Caco-2 (cell line): ENCODE measurements at regions of chr2 and their contacts with region 1.

Region 1: DNA sequence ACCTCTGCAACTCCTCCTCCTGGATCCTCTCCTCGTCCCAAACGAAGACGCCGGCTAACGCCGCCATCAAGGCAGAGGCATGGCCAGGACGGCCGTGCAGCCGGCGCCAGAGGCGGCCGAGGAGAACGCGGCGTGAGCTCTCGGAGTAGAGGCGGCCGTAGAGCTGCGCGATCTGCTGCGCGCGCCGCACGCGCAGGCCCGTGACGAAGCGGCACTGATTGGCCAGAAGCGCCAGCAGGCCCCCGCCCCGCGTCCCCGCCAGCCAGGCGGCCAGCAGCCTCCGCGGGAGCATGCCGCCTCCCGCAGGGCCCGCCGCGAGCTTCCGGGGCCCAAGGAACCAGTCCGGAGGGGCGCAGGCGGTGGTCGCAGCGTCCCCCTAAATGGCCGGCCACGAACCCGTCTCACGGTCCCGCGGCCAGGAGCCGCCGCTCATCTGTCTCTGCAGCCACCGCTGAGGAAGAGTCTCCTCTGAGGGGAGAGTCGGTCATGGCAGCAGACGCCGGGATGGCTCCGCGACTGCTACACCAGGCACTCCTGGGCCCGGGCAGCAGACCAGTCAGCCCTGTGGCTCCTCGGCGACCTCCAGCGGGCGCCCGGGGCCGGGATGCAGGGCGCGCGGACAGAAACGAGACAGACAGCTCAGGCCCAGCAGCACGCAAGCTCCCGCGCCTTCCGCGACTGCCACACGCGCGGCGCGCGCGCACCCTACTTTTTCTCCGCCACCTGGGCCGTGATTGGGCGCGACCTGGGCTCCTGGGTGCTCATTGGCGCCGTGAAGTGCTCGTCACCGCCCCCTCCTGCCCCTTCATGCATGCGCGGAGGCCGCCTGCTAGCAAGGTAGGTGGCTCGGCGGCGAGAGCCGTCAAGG is at the start of gene STARD7:
- DNase-seq: peak; percentile 99 to 100
- H3K4me3 ChIP-seq: peak within 1 kb of the TSS; percentile 68
- H3K4me3 Mint-ChIP-seq: peak within 1 kb of the TSS; percentile 96
- H3K27ac Mint-ChIP-seq: peak within 1 kb of the TSS; percentile 80
- H3K4me1 ChIP-seq: peaks cover 31% of the 10 kb centered on the region
- H3K4me1 Mint-ChIP-seq: peaks cover 28% of the 10 kb centered on the region
- H3K27me3 ChIP-seq: no peaks in the 10 kb centered on the region
- H3K27me3 Mint-ChIP-seq: no peaks in the 10 kb centered on the region
- CTCF ChIP-seq: peak; percentile 11 to 26
- total RNA-seq, gene STARD7: 214 and 224 TPM in 2 replicates

Region 2: DNA sequence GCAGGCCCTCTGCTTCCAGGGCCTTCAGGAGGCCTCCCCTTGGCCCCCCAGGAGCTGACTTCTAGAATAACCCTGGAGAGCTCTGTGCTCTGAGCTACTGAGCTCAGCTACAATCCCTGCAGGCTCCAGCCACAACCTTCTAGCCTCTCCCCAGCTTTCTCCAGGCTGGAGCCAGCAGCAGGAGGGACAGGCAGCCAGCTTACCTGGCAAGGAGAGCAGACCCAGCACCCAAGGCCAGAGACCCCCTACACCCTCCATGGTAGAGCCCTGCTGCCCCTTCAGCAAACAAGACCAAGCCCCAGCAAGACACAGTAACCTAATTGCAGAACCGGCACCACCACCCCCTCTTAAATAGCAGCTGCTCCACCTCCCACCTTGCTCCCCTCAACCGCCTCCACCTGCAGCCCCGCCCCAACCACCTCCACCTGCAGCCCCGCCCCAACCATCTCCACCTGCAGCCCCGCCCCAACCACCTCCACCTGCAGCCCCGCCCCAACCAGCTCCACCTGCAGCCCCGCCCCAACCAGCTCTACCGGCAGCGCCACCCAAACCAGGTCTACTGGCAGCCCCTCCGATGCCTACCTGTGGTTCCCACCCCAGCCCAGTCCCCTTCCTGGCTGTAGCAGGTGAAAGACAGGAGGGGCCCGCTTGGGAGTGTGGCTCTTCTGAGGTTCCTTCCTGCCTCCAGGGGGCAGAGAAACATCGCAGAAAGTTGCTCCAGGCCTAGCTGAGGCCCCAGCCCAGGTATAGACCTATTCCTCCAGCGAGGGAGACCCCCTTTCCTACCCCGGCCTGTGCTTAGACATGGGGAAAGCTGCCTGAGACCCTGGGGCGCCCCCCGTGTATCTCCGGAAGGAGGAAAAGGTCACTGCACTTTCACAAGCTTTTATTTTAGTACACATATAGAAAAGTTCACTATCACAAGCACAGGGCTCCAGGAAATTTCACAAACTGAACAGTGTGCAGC is 69.9 kb before region 1 on chr2 and contains the start of gene ASTL:
- CTCF ChIA-PET with region 1: interaction called, 3 read pairs
- POLR2A ChIA-PET with region 1: interaction called, 3 read pairs
- intact Hi-C with region 1: loop called (anchors 1 kb)
- DNase-seq: peak; percentile 86 to 90
- H3K4me3 ChIP-seq: peak within 1 kb of the TSS; percentile 26
- H3K4me3 Mint-ChIP-seq: peak within 1 kb of the TSS; percentile 52
- H3K27ac Mint-ChIP-seq: no peak within 1 kb of the TSS
- H3K4me1 ChIP-seq: peaks cover 4% of the 10 kb centered on the region; the same call in 1 of the 2 replicates
- H3K4me1 Mint-ChIP-seq: peaks cover 6% of the 10 kb centered on the region
- H3K27me3 ChIP-seq: no peaks in the 10 kb centered on the region
- H3K27me3 Mint-ChIP-seq: peaks cover 8% of the 10 kb centered on the region
- CTCF ChIP-seq: peak; percentile 42 to 76
- total RNA-seq, gene ASTL: 0.23 TPM in 1 of 2 replicates, not detected in the other

Region 3: DNA sequence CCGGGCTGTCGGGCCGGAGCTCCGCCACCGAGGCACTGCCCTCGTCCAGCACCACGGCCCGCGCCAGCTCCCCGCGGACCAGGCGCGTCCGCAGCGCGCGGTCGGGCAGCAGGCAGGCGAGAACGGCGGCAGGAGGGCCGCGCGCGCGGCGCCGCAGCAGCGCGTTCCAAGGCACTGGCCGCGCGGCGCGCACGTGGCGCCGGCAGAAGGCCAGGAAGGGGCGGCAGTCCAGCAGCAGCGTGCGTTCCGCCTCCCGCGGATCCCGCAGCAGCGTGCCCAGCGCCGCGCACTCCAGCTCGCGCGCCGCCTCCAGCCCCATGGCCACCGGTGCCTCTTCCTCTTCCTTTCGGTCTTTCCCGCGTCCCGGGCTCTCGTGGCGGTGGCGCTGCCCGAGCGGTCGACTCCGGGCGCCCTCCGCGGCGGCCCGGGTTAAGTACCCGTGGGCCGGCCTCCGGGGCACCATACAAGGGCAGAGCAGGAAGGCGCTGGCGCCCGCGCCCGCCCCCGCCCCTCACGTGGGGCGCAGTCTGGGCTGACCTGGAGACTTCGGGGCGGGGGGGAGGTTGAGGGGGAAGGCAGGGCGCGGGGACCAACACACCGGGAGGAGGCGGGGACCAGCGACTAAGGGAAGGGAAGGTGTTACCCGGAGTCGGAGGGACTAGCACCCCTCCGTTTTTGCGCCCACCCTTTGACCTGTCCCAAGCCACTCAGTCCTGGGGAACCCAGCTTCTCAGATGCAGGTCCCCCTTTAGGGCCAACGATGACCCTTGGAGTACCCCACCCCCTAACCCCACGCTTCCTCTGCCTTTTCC is 63.1 kb before region 1 on chr2 and contains the start of gene DUSP2:
- CTCF ChIA-PET with region 1: interaction called, 3 read pairs
- POLR2A ChIA-PET with region 1: interaction called, 3 read pairs
- intact Hi-C with region 1: loop called (anchors 2 kb)
- DNase-seq: peak; percentile 84 to 89
- H3K4me3 ChIP-seq: peak within 1 kb of the TSS; percentile 70
- H3K4me3 Mint-ChIP-seq: peak within 1 kb of the TSS; percentile 98
- H3K27ac Mint-ChIP-seq: peak within 1 kb of the TSS; percentile 94
- H3K4me1 ChIP-seq: peaks cover 14% of the 10 kb centered on the region
- H3K4me1 Mint-ChIP-seq: no peaks in the 10 kb centered on the region
- H3K27me3 ChIP-seq: no peaks in the 10 kb centered on the region
- H3K27me3 Mint-ChIP-seq: no peaks in the 10 kb centered on the region
- CTCF ChIP-seq: peak in 1 of 2 experiments; percentile 5
- total RNA-seq, gene DUSP2: 13.4 and 13.6 TPM in 2 replicates

Region 4: DNA sequence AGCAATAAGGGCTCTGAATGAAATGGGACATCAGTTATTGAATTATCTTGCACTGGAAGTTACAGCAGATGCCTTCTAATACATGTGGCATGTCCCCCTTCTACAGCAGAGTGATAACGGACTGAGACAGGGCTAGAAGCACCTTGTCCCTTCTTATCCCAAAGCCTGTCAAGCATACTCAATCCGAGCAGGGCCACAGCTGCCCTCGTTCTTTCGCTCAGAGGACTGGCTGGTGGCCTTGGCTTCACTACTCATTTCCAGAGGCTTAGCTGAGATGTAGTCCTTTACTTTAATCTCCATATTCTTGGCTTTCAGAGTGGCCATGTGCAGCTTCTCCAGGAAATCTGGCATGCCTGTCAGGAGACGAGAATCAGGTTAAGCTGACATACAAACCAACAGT is 21.8 kb before region 1 on chr2:
- CTCF ChIA-PET with region 1: interaction called, 3 read pairs
- POLR2A ChIA-PET with region 1: interaction called, 8 read pairs
- intact Hi-C with region 1: loop called (anchors 1 kb)
- DNase-seq: no peak
- H3K4me3 ChIP-seq: no peak overlapping the region
- H3K4me3 Mint-ChIP-seq: no peak overlapping the region
- H3K27ac Mint-ChIP-seq: peak overlapping the region; percentile 39
- H3K4me1 ChIP-seq: peaks cover 25% of the 10 kb centered on the region
- H3K4me1 Mint-ChIP-seq: peaks cover 20% of the 10 kb centered on the region
- H3K27me3 ChIP-seq: no peaks in the 10 kb centered on the region
- H3K27me3 Mint-ChIP-seq: no peaks in the 10 kb centered on the region
- CTCF ChIP-seq: no peak

Region 5: DNA sequence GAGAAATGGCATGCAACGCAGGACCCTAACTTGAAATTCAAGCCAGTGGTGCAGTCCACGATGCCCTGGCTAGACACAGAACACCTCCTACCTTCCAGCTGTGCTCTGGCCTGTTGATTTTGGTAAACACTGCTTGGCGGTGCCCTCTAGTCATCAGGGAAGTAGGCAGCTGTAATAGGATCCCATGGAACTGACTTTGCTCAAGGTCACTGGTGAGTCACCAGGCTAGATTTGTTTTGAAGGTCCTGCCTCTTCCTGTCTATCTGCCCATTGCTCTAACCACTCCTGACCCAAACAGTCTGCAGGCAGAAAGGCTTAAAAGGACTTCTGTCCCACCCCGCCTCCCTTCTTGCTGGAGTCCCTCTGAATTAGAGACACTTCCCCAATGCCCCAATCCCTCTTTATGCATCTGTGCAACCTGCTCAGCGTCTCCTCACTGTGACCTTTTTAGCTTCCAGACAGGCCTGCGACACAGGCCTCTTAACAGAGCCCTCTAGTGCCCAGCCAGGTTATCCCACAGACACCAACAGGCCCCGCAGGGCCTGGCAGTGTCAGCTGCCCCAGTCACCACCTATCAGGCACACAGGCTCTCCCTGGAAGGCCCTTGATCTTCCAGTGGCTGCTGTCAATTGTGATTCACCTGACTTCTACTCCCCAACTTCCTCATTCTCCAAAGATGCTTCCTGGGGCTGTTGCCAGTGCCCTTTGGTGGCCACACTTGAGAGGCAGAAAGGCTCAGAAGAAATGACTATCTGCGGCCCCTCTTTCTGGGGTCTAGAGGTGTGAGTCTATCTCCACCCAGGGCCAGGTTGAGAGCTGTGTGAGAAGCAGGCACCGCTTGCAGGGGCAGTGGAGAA is 52.3 kb after region 1 on chr2:
- CTCF ChIA-PET with region 1: interaction called, 21 read pairs
- POLR2A ChIA-PET with region 1: interaction called, 12 read pairs
- intact Hi-C with region 1: loop called (anchors 1 kb)
- DNase-seq: peak; percentile 58 to 60
- H3K4me3 ChIP-seq: no peak overlapping the region
- H3K4me3 Mint-ChIP-seq: no peak overlapping the region
- H3K27ac Mint-ChIP-seq: peak overlapping the region; percentile 47
- H3K4me1 ChIP-seq: peaks cover 37% of the 10 kb centered on the region
- H3K4me1 Mint-ChIP-seq: peaks cover 30% of the 10 kb centered on the region
- H3K27me3 ChIP-seq: no peaks in the 10 kb centered on the region
- H3K27me3 Mint-ChIP-seq: no peaks in the 10 kb centered on the region
- CTCF ChIP-seq: peak in 1 of 2 experiments; percentile 42

Region 6: DNA sequence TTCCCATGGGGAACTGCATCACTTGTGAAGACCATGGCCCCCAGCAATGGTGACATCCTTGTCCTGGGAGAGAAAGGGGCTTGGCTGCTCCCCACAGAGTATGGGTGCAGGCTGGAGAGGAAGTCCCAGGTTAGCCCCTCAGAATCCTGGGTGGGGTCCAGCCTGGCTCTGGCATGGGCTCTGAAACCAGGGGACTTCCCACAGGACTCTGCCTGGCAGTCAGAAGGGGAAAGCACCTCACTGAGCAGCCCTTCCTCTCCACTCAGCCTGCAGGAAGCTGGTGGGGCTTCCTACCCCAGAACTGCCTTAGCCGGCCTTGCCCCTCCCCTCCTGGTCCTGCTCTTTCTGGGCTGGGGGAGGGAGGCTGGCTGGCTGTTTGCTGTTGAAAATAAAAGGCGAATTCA is 293.1 kb after region 1 on chr2:
- CTCF ChIA-PET with region 1: no interaction called
- POLR2A ChIA-PET with region 1: no interaction called
- intact Hi-C with region 1: no loop called
- DNase-seq: no peak
- H3K4me3 ChIP-seq: no peak overlapping the region
- H3K4me3 Mint-ChIP-seq: no peak overlapping the region
- H3K27ac Mint-ChIP-seq: no peak overlapping the region
- H3K4me1 ChIP-seq: peaks cover 32% of the 10 kb centered on the region
- H3K4me1 Mint-ChIP-seq: peaks cover 19% of the 10 kb centered on the region
- H3K27me3 ChIP-seq: no peaks in the 10 kb centered on the region
- H3K27me3 Mint-ChIP-seq: no peaks in the 10 kb centered on the region
- CTCF ChIP-seq: no peak